PC-9 (cell line): ENCODE measurements at regions of chr4 and their contacts with region 1.

Region 1: DNA sequence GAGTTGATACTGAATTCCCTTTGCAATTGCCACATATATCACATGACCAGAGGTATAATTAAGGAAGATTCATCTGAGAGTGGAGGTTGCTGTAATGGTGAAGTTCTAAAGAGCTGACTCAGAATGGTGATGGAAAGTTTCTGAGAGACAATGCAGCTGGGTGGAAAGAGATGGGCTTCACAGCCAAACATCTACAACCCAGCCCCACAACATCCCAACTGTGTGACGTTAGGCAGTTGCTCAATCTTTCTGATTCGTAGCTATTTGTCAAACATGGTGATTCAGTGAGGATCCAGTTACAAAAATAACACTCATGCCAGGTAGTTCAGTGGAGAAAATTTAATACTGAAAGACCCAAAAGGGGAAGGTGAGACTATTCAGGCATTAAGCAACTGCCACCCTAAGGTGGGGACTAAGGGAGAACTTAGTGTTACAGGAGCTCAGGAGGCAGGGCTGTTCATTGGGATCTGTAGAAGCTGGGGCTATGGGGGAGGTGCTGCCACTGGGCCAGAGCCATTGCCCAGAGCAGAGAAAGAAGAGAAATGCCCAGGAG is 6.9 kb upstream of the AFF1 start:
- DNase-seq: peak; percentile 65 to 90
- H3K4me3 ChIP-seq: no peak overlapping the region
- H3K27ac ChIP-seq: peak overlapping the region; percentile 83
- H3K4me1 ChIP-seq: peaks cover 32% of the 10 kb centered on the region
- H3K27me3 ChIP-seq: no peaks in the 10 kb centered on the region
- CTCF ChIP-seq: no peak

Region 2: GRCh38 chr4:87108142-87108546 is 180.2 kb after region 1 on chr4:
- CTCF ChIA-PET with region 1: no interaction called
- POLR2A ChIA-PET with region 1: no interaction called
- intact Hi-C with region 1: loop called (anchors 5 kb)
- DNase-seq: peak; percentile 51 to 59
- H3K4me3 ChIP-seq: no peak overlapping the region
- H3K27ac ChIP-seq: peak overlapping the region; percentile 49
- H3K4me1 ChIP-seq: peaks cover 34% of the 10 kb centered on the region
- H3K27me3 ChIP-seq: no peaks in the 10 kb centered on the region
- CTCF ChIP-seq: no peak